A549 (cell line): ENCODE measurements at regions of chr3 and their contacts with region 1.

Region 1: GRCh38 chr3:47420511-47421484 is 40.0 kb downstream of the PTPN23 start:
- DNase-seq: peak; percentile 80 to 83
- ATAC-seq: peak; percentile 68 to 83
- H3K4me3 ChIP-seq: no peak overlapping the region
- H3K27ac ChIP-seq: peak overlapping the region; percentile 52 to 72; a peak in 5 of 6 replicates
- H3K4me1 ChIP-seq: 0 out of 3 replicates have a peak, but pooled peaks cover 7% of the 10 kb centered on the region
- CTCF ChIP-seq: peak; percentile 69
- EP300 ChIP-seq: no peak
- POLR2A ChIP-seq: no peak
- RAD21 ChIP-seq: peak; percentile 71 to 73; a peak in 4 of 5 replicates

Region 2: DNA sequence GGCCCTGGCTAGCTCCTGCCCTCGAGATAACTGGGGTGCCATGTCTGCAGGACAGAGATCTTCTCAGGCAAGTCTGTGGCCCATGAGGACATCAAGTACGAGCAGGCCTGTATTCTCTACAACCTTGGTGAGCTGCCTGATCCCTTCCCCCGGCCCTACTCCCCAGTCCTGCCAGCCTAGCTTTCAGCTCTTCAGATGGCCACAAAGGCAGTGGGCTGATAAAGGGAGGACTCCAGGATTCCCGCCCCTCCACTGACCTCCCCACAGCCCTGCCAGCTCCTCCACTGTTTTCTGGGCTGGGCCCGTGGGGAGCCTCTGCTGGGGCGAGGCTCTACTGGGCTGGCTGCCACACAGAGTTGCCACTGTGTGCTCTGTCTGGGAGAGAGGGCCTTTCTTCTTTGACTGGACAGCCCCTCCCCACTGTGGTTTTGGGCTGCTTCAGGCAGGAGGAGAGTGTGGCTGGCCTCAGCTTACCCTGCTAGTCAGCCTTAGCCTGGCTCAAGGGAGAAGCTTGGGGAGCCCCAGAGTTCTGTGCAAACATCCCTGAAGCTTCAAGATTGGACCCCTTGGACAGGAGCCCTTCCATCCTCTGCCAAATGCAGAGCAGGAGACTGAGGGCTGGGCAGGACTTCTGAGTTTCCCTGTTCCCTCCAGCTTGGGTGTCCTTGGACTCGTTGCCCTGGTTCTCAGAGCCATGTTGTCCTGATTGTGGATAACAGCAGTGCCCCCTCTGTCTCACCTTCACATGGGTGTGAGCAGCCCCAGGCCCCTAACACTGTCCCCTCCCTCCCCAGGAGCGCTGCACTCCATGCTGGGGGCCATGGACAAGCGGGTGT is 15.6 kb before region 1 on chr3:
- CTCF ChIA-PET with region 1: interaction called, 11 read pairs
- POLR2A ChIA-PET with region 1: no interaction called
- DNase-seq: no peak
- ATAC-seq: peak in 1 of 2 experiments; percentile 10; a peak in 2 of 6 replicates
- H3K4me3 ChIP-seq: no peak overlapping the region
- H3K27ac ChIP-seq: no peak overlapping the region
- H3K4me1 ChIP-seq: peaks cover 3% of the 10 kb centered on the region; the same call in 1 of the 3 replicates
- CTCF ChIP-seq: no peak
- EP300 ChIP-seq: no peak
- POLR2A ChIP-seq: no peak
- RAD21 ChIP-seq: no peak

Region 3: DNA sequence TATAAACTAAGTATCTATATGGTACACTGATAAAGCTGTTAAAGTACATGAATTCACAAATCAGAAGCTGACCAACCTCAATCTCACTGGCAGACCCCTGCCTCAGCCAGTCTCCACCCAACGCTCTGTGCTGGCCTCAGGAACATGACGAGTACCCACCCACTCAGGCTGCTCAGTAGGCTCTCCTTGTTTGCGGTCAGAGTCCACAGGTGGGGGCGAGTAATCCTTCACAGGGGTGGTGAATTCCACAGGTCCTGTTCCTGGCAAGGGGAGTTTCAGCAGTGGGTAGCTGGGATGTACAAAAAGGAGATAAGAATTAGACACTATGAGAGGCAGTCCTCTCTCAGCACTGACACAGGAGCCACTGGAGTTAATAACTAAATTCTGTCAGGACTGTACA is 14.1 kb after region 1 on chr3:
- CTCF ChIA-PET with region 1: interaction called, 24 read pairs
- POLR2A ChIA-PET with region 1: no interaction called
- DNase-seq: no peak
- ATAC-seq: no peak
- H3K4me3 ChIP-seq: no peak overlapping the region
- H3K27ac ChIP-seq: no peak overlapping the region
- H3K4me1 ChIP-seq: no peaks in the 10 kb centered on the region
- CTCF ChIP-seq: no peak
- EP300 ChIP-seq: no peak
- POLR2A ChIP-seq: no peak
- RAD21 ChIP-seq: no peak

Region 4: GRCh38 chr3:47475570-47476329 is 55.0 kb after region 1 on chr3 and contains the start of gene SCAP:
- CTCF ChIA-PET with region 1: interaction called, 34 read pairs
- POLR2A ChIA-PET with region 1: no interaction called
- DNase-seq: peak; percentile 59 to 88
- ATAC-seq: peak; percentile 89 to 94
- H3K4me3 ChIP-seq: peak within 1 kb of the TSS; percentile 99
- H3K27ac ChIP-seq: peak within 1 kb of the TSS; percentile 96 to 97
- H3K4me1 ChIP-seq: no peaks in the 10 kb centered on the region; the same call in 2 of the 3 replicates
- CTCF ChIP-seq: peak; percentile 75
- EP300 ChIP-seq: no peak
- POLR2A ChIP-seq: peak; percentile 38
- RAD21 ChIP-seq: peak; percentile 52 to 62
- polyA plus RNA-seq, gene SCAP: 12.9 and 27.2 TPM in 2 replicates